ENCODE measurements at regions of chr11 and their contacts with region 1.

Region 1: DNA sequence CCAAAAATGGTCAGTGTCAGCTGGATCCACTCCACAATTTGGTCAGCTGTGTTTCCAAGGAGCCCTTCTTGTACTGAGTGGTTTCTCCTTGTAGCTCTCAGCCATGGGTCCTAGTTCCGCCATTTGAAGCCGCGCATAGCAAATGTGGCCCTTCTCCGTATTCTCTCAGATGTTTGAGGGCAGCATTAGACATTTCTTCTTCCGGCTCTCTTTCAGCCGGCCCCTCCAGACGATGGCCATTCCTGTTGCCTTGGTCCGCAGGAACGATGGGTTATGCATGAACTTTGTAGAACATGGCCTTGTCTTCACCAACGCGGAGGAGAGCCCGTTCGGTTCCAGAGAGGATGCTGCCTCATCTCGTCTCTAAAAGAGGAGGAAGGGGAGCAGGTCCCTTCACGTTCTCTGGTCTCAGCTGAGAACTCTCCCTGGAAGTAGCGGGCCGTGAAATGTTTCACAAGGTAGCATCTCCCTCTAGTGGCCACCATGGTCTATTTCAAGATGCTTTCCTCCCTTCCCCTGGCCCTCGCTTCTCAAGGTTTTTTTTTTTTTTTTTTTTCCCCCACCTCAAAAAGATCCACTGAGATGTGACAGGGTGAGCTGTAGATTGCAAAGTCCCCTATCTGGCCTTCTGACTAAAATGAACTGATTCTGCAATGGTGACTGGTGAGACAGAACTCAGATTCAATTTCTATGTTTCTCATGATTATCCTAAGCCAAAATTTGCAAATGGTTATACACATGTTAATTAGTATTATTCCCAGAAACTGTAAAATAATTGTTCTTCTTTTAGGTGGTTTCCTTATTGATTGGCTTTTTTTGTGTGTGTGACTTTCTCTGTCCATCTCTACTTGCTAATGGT is 19.8 kb upstream of the PLET1 start:
- DNase-seq: peak; percentile 78
- ATAC-seq: peak; percentile 95
- H3K4me3 Mint-ChIP-seq: peak overlapping the region; percentile 82
- H3K27ac Mint-ChIP-seq: peak overlapping the region; percentile 74
- H3K4me1 Mint-ChIP-seq: peaks cover 7% of the 10 kb centered on the region
- H3K27me3 Mint-ChIP-seq: no peaks in the 10 kb centered on the region
- CTCF ChIP-seq: peak; percentile 49

Region 2: GRCh38 chr11:112113539-112114457 is 166.7 kb before region 1 on chr11:
- CTCF ChIA-PET with region 1: interaction called, 24 read pairs
- POLR2A ChIA-PET with region 1: no interaction called
- intact Hi-C with region 1: loop called (anchors 10 kb)
- DNase-seq: no peak
- ATAC-seq: peak; percentile 73
- H3K4me3 Mint-ChIP-seq: no peak overlapping the region
- H3K27ac Mint-ChIP-seq: no peak overlapping the region
- H3K4me1 Mint-ChIP-seq: peaks cover 11% of the 10 kb centered on the region
- H3K27me3 Mint-ChIP-seq: no peaks in the 10 kb centered on the region
- CTCF ChIP-seq: peak; percentile 86

Region 3: GRCh38 chr11:112226062-112226830 is 54.3 kb before region 1 on chr11 and contains the start of gene PTS:
- CTCF ChIA-PET with region 1: interaction called, 208 read pairs
- POLR2A ChIA-PET with region 1: no interaction called
- intact Hi-C with region 1: no loop called
- DNase-seq: peak; percentile 85
- ATAC-seq: peak; percentile 97
- H3K4me3 Mint-ChIP-seq: peak within 1 kb of the TSS; percentile 70
- H3K27ac Mint-ChIP-seq: peak within 1 kb of the TSS; percentile 95
- H3K4me1 Mint-ChIP-seq: peaks cover 15% of the 10 kb centered on the region
- H3K27me3 Mint-ChIP-seq: peaks cover 1% of the 10 kb centered on the region
- CTCF ChIP-seq: no peak
- total RNA-seq, gene PTS: 22.6 to 24.9 TPM

Region 4: DNA sequence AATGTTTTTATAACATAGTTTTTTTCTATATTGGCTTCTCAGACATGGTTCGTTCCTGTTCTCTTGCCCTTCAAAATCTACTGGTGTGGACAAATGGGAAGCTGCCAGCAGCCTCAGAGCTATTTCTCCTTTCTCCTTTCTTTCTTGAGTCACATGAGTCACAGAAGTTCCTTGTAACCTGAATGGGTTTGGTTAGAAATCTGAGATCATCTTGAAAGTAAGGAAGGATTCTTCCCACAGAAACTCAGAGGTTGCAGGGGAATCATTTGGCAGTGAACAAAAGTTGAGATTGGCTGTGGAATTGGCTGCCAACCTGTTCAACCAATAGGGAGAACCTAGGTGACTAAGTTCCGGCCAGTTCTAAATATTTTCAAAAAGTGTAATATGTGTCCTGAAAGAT is 32.3 kb before region 1 on chr11:
- CTCF ChIA-PET with region 1: interaction called, 18 read pairs
- POLR2A ChIA-PET with region 1: no interaction called
- intact Hi-C with region 1: no loop called
- DNase-seq: no peak
- ATAC-seq: no peak
- H3K4me3 Mint-ChIP-seq: no peak overlapping the region
- H3K27ac Mint-ChIP-seq: no peak overlapping the region
- H3K4me1 Mint-ChIP-seq: no peaks in the 10 kb centered on the region
- H3K27me3 Mint-ChIP-seq: no peaks in the 10 kb centered on the region
- CTCF ChIP-seq: no peak

Region 5: GRCh38 chr11:112343368-112344039 is 63.0 kb after region 1 on chr11:
- CTCF ChIA-PET with region 1: no interaction called
- POLR2A ChIA-PET with region 1: no interaction called
- intact Hi-C with region 1: no loop called
- DNase-seq: no peak
- ATAC-seq: no peak
- H3K4me3 Mint-ChIP-seq: no peak overlapping the region
- H3K27ac Mint-ChIP-seq: no peak overlapping the region
- H3K4me1 Mint-ChIP-seq: peaks cover under 1% of the 10 kb centered on the region
- H3K27me3 Mint-ChIP-seq: no peaks in the 10 kb centered on the region
- CTCF ChIP-seq: no peak

Region 6: DNA sequence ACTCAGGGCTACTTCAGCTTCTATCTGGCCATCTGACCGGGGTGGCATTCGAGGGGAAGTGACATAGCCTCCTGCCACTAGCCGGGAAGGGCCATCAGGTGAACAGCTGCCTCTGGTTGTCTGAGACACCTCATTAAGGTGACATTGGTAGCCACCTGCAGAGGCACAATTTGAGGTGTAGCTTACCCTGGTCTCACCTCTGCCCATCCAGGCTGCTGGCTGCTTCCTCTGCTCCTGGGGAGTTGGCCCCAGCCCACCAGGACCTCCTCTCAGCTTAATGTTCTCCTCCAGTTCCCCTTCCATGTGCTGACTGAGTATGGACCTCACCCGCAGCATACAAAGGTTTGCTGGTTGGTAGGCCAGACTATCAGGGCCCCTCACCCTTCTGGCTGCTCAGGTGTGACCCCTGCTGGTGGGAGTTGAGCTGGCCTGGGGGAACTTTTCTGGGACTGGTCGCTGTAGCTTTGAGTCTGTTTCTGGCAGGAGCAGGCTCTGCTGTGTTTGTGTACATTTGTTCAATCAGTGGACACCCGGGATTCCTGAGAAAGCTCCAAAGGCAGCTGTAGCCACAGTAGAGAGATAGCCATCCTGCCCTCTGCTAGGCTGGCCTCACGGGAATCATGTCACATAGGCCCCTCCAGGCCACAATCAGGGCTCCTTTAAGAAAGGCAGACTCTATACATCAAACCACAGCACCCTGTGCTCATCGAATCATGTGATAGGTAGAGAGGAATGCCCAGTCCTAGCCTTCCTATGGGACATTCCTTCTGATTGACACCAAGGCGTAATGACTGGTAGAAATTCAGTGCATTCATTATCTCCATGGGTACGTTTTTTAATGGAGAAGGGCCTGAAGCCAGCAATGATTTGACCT is 275.2 kb after region 1 on chr11:
- CTCF ChIA-PET with region 1: interaction called, 28 read pairs
- POLR2A ChIA-PET with region 1: no interaction called
- intact Hi-C with region 1: no loop called
- DNase-seq: peak; percentile 71
- ATAC-seq: peak; percentile 82
- H3K4me3 Mint-ChIP-seq: no peak overlapping the region
- H3K27ac Mint-ChIP-seq: no peak overlapping the region
- H3K4me1 Mint-ChIP-seq: no peaks in the 10 kb centered on the region
- H3K27me3 Mint-ChIP-seq: peaks cover 6% of the 10 kb centered on the region
- CTCF ChIP-seq: peak; percentile 67

Measured in activated CD8-positive, alpha-beta T cell treated with anti-CD3 and anti-CD28 coated beads for 36 hours (primary cell).